Psoas muscle (tissue), 8 donors: ENCODE measurements at regions of chr1 and their contacts with region 1.

Region 1: DNA sequence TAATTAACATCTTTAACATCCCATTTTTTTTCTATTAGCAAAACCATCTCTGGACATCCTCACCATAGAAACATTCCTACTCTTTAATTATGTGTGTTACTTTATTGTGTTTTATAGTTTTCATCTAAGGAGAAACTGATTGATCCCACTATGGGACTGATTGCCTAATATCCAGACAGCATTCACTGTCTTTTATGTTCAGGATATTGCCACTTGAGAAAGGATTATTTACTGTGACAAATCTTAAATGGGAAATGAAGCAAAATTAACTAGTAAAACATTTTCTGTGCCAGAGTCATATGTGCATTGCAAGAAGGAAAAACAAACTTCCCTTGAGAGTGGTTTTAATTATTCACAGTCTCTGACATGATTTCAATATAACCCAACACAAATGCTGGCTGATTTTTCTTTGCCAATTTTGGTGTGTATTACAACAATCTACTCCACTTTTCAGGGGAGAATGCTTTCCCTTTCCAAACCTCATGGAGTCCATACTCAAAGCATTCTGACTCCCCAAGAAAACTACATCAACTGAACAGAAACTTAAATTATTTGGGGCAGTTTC is 15.8 kb upstream of the RGS13 start:
- DNase-seq: no peak
- ATAC-seq: no peak
- H3K4me3 ChIP-seq: no peak overlapping the region
- H3K27ac ChIP-seq: no peak overlapping the region
- H3K4me1 ChIP-seq: no peaks in the 10 kb centered on the region
- H3K27me3 ChIP-seq: no peaks in the 10 kb centered on the region
- CTCF ChIP-seq: no peak

Region 2: GRCh38 chr1:192801451-192801850 is 181.3 kb after region 1 on chr1:
- intact Hi-C with region 1: loop called in 1 of 2 experiments (anchors 1 kb)
- DNase-seq: no peak
- ATAC-seq: no peak
- H3K4me3 ChIP-seq: no peak overlapping the region
- H3K27ac ChIP-seq: no peak overlapping the region
- H3K4me1 ChIP-seq: no peaks in the 10 kb centered on the region
- H3K27me3 ChIP-seq: no peaks in the 10 kb centered on the region
- CTCF ChIP-seq: no peak